Heart left ventricle (tissue), 16 donors: ENCODE measurements at regions of chr20 and their contacts with region 1.

Region 1: GRCh38 chr20:24027229-24027628 is 38.6 kb upstream of the GGTLC1 start:
- DNase-seq: peak; percentile 44 to 76 (median 70)
- ATAC-seq: peak; percentile 54 to 96 (median 83)
- H3K4me3 ChIP-seq: no peak overlapping the region
- H3K27ac ChIP-seq: peak overlapping the region in 11 of 12 donors; percentile 5 to 83 (median 44)
- H3K4me1 ChIP-seq: peaks cover 0 to 23% (median 0%) of the 10 kb centered on the region in 12 donors
- H3K27me3 ChIP-seq: no peaks in the 10 kb centered on the region
- CTCF ChIP-seq: no peak
- POLR2A ChIP-seq: no peak

Region 2: DNA sequence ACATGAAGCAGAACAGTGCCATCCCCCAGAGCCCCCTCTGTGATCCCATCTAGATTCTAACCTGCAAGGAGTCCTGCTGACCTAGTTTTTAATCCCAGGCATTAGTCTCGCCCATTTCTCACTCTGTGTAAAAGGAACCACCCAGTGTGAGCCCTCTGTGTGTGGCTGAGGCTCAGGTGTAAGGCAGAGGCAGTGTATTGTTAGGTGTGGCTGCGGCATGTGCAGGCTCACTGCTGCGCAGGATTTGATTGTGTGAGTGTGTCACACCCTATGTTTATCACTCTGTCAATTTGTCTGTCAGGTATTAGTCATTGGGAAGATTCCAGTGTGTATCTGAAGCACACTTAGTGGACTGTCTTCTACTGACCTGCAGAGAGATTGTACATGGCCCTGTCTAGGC is 550.0 kb before region 1 on chr20:
- intact Hi-C with region 1: loop called in 1 of 10 experiments (anchors 10 kb)
- DNase-seq: no peak
- ATAC-seq: no peak
- H3K4me3 ChIP-seq: no peak overlapping the region
- H3K27ac ChIP-seq: no peak overlapping the region
- H3K4me1 ChIP-seq: no peaks in the 10 kb centered on the region
- H3K27me3 ChIP-seq: peaks cover 0 to 7% (median 0%) of the 10 kb centered on the region in 9 donors
- CTCF ChIP-seq: no peak
- POLR2A ChIP-seq: no peak

Region 3: GRCh38 chr20:23954008-23954745 is 73.1 kb before region 1 on chr20:
- intact Hi-C with region 1: no loop called
- DNase-seq: no peak
- ATAC-seq: no peak
- H3K4me3 ChIP-seq: no peak overlapping the region
- H3K27ac ChIP-seq: no peak overlapping the region
- H3K4me1 ChIP-seq: no peaks in the 10 kb centered on the region
- H3K27me3 ChIP-seq: peaks cover 0 to 16% (median 0%) of the 10 kb centered on the region in 9 donors
- CTCF ChIP-seq: no peak
- POLR2A ChIP-seq: no peak